CD8-positive, alpha-beta T cell (primary cell): ENCODE measurements at regions of chr3 and their contacts with region 1.

Region 1: DNA sequence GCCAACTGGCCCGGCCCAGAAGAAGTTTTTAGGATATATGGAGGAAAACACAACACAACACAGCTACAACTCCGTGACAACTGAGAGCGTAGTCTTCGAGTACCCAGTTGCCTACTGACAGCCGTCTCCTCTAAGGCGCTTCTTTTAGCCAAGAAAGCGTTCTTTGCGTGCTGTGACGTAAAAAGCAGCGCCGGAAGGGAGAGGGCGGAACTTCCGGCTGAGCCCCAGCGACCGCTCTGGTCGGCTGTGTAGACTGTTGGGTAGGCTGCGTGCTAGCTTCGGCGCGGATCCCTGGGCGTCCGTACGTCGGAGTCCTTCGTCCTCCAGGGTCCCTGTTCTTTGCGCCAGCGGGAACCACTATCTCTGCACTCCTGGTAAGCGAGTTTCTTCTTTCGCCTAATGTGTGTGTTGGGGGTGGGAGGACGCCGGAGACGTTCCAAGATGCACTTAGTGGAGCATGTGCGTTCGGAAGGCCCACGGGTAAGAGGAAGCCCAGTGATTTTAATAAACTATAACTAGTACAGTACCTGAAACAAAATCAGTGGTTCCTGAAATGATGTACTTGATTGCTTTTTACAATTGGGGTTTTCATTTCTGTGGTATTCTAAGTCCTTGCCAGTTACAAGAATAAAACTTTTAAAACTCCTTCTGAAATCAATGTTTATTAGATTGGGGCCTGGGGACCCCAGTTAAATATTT is at the start of gene TRMT10C:
- DNase-seq: peak; percentile 86 to 96 (median 92)
- ATAC-seq: peak; percentile 95
- H3K4me3 ChIP-seq: peak within 1 kb of the TSS; percentile 83 to 96
- H3K4me3 Mint-ChIP-seq: peak within 1 kb of the TSS; percentile 99
- H3K27ac ChIP-seq: peak within 1 kb of the TSS; percentile 86 to 93
- H3K27ac Mint-ChIP-seq: peak within 1 kb of the TSS; percentile 99
- H3K4me1 ChIP-seq: peaks cover 12% of the 10 kb centered on the region
- H3K4me1 Mint-ChIP-seq: peaks cover 27% of the 10 kb centered on the region
- H3K27me3 ChIP-seq: no peaks in the 10 kb centered on the region
- H3K27me3 Mint-ChIP-seq: peaks cover 1% of the 10 kb centered on the region
- CTCF ChIP-seq: no peak
- total RNA-seq, gene TRMT10C: 41.5 to 44.0 TPM

Region 2: GRCh38 chr3:101391413-101391950 is 170.3 kb before region 1 on chr3:
- CTCF ChIA-PET with region 1: no interaction called
- POLR2A ChIA-PET with region 1: no interaction called
- intact Hi-C with region 1: loop called in 1 of 2 experiments (anchors 5 kb)
- DNase-seq: no peak
- ATAC-seq: no peak
- H3K4me3 ChIP-seq: no peak overlapping the region
- H3K4me3 Mint-ChIP-seq: no peak overlapping the region
- H3K27ac ChIP-seq: peak overlapping the region in 1 of 2 experiments; percentile 3
- H3K27ac Mint-ChIP-seq: peak overlapping the region; percentile 42
- H3K4me1 ChIP-seq: no peaks in the 10 kb centered on the region
- H3K4me1 Mint-ChIP-seq: peaks cover 42% of the 10 kb centered on the region
- H3K27me3 ChIP-seq: no peaks in the 10 kb centered on the region
- H3K27me3 Mint-ChIP-seq: no peaks in the 10 kb centered on the region
- CTCF ChIP-seq: no peak

Region 3: DNA sequence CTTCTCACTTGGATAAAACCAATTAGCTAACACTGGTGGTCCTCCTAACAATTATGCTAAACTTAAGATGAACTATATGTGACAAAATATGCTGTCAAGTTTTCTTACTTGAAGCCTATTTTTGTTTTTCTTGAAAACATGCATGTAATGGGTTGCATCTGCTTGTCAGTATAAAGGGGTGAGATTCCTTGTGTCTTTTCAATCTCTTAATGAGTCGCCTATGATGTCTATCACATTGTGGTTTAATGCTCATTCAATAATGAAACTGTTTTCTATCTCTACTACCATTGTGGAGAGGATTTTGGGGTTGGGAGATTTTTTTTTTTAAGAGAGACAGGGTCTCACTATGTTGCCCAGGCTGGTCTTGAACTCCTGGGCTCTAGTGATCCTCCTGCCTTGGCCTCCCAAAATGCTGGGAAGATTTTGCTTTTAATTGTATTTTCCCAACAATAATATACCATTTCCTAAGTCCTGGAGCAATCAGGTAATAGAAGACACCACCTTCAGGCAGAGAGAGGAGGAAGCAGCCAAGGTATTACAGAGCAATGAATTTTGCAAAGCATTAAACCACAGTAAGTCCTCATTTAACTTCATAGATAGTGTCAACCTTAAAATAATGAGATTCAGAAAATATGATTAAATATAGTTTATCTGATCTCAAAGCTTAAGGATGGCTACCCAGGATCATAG is 17.5 kb before region 1 on chr3:
- CTCF ChIA-PET with region 1: no interaction called
- POLR2A ChIA-PET with region 1: interaction called, 4 read pairs
- intact Hi-C with region 1: loop called in 1 of 2 experiments (anchors 2 kb)
- DNase-seq: no peak
- ATAC-seq: peak; percentile 65
- H3K4me3 ChIP-seq: no peak overlapping the region
- H3K4me3 Mint-ChIP-seq: peak overlapping the region; percentile 0
- H3K27ac ChIP-seq: peak overlapping the region in 1 of 2 experiments; percentile 25
- H3K27ac Mint-ChIP-seq: peak overlapping the region; percentile 81
- H3K4me1 ChIP-seq: peaks cover 31% of the 10 kb centered on the region
- H3K4me1 Mint-ChIP-seq: peaks cover 33% of the 10 kb centered on the region
- H3K27me3 ChIP-seq: no peaks in the 10 kb centered on the region
- H3K27me3 Mint-ChIP-seq: no peaks in the 10 kb centered on the region
- CTCF ChIP-seq: no peak

Region 4: DNA sequence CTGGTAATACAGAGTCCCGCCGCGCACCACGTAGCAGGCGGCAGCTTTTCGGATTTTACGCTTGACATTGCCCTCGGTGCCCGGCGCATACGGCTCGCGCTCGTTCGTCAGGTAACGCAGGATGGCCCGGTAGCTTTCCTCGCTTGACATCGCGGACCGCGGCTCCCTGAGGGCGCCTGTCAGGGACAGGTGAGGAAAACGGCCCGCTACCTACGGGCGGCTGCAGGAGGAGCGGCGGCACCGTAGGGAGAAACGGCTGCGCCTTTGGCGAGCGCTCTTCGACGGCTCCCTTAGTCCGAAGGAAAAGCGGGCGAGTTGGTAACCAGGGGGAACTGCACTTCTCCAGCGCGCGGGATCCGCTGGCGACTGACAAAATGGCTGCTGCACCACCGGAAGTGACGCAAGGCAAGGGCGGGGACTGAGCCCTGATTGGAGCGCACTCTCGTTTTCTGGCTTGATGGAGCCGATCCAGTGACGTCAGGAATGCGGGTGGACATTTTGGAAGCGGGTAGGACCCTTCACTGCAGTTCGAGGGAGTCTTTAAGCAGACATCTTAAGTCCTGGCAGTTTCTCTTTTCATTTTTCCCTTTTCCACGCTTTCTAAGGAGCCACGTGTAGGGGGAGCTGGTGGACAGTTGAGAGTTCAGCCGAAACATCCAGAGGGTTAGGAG is 115.1 kb after region 1 on chr3 and contains the start of gene ZBTB11:
- CTCF ChIA-PET with region 1: no interaction called
- POLR2A ChIA-PET with region 1: interaction called, 3 read pairs
- intact Hi-C with region 1: loop called in 1 of 2 experiments (anchors 1 kb)
- DNase-seq: peak; percentile 99 to 100 (median 100)
- ATAC-seq: peak; percentile 63
- H3K4me3 ChIP-seq: peak within 1 kb of the TSS; percentile 90 to 100
- H3K4me3 Mint-ChIP-seq: peak within 1 kb of the TSS; percentile 95
- H3K27ac ChIP-seq: peak within 1 kb of the TSS; percentile 97 to 99
- H3K27ac Mint-ChIP-seq: peak within 1 kb of the TSS; percentile 98
- H3K4me1 ChIP-seq: peaks cover 26% of the 10 kb centered on the region
- H3K4me1 Mint-ChIP-seq: peaks cover 49% of the 10 kb centered on the region
- H3K27me3 ChIP-seq: no peaks in the 10 kb centered on the region
- H3K27me3 Mint-ChIP-seq: no peaks in the 10 kb centered on the region
- CTCF ChIP-seq: no peak
- total RNA-seq, gene ZBTB11: 69.6 to 75.2 TPM